B cell (primary cell): ENCODE measurements at regions of chr6 and their contacts with region 1.

Region 1: GRCh38 chr6:57316581-57317059 is 810 bp upstream of the PRIM2 start:
- DNase-seq: peak; percentile 88
- ATAC-seq: peak; percentile 83
- H3K4me3 ChIP-seq: peak overlapping the region; percentile 52 to 98 (median 78)
- H3K4me3 Mint-ChIP-seq: peak overlapping the region; percentile 98
- H3K27ac ChIP-seq: peak overlapping the region in 1 of 2 donors; percentile 60
- H3K27ac Mint-ChIP-seq: peak overlapping the region; percentile 93
- H3K4me1 ChIP-seq: peaks cover 7 to 8% of the 10 kb centered on the region in 2 donors
- H3K4me1 Mint-ChIP-seq: peaks cover 20% of the 10 kb centered on the region
- H3K27me3 ChIP-seq: peaks cover 0 to 3% (median 0%) of the 10 kb centered on the region in 4 experiments
- H3K27me3 Mint-ChIP-seq: no peaks in the 10 kb centered on the region
- CTCF ChIP-seq: peak; percentile 89

Region 2: DNA sequence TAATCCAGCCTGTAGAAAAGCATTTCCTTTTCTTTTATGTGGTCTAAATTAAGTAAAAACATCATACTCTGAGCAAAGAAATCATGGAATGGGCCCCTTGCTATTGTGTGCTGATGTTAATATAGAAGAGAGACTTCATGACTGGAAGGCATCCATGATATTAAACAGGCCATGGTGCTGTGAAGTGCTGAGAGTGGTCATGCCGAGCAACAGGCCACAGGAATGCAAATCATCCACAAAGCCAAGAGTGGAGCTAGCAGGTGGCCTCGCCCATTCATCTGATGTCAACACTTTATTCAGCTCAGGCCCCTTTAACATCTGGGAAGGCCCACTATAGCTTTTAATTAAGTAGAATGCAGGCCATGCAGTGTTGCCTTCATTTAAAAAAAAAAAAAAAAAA is 1622.5 kb before region 1 on chr6:
- CTCF ChIA-PET with region 1: no interaction called
- POLR2A ChIA-PET with region 1: no interaction called
- intact Hi-C with region 1: no loop called
- DNase-seq: no peak
- ATAC-seq: no peak
- H3K4me3 ChIP-seq: no peak overlapping the region
- H3K4me3 Mint-ChIP-seq: no peak overlapping the region
- H3K27ac ChIP-seq: no peak overlapping the region
- H3K27ac Mint-ChIP-seq: no peak overlapping the region
- H3K4me1 ChIP-seq: no peaks in the 10 kb centered on the region
- H3K4me1 Mint-ChIP-seq: no peaks in the 10 kb centered on the region
- H3K27me3 ChIP-seq: no peaks in the 10 kb centered on the region
- H3K27me3 Mint-ChIP-seq: no peaks in the 10 kb centered on the region
- CTCF ChIP-seq: no peak

Region 3: GRCh38 chr6:56359201-56359899 is 957.3 kb before region 1 on chr6:
- CTCF ChIA-PET with region 1: no interaction called
- POLR2A ChIA-PET with region 1: no interaction called
- intact Hi-C with region 1: loop called (anchors 2 kb)
- DNase-seq: peak; percentile 64
- ATAC-seq: peak; percentile 56
- H3K4me3 ChIP-seq: no peak overlapping the region
- H3K4me3 Mint-ChIP-seq: no peak overlapping the region
- H3K27ac ChIP-seq: no peak overlapping the region
- H3K27ac Mint-ChIP-seq: no peak overlapping the region
- H3K4me1 ChIP-seq: no peaks in the 10 kb centered on the region
- H3K4me1 Mint-ChIP-seq: no peaks in the 10 kb centered on the region
- H3K27me3 ChIP-seq: no peaks in the 10 kb centered on the region
- H3K27me3 Mint-ChIP-seq: no peaks in the 10 kb centered on the region
- CTCF ChIP-seq: peak; percentile 95

Region 4: GRCh38 chr6:56902641-56903464 is 413.8 kb before region 1 on chr6:
- CTCF ChIA-PET with region 1: interaction called, 188 read pairs
- POLR2A ChIA-PET with region 1: no interaction called
- intact Hi-C with region 1: loop called (anchors 1 kb)
- DNase-seq: peak; percentile 44
- ATAC-seq: no peak
- H3K4me3 ChIP-seq: no peak overlapping the region
- H3K4me3 Mint-ChIP-seq: no peak overlapping the region
- H3K27ac ChIP-seq: no peak overlapping the region
- H3K27ac Mint-ChIP-seq: no peak overlapping the region
- H3K4me1 ChIP-seq: peaks cover 0 to 4% of the 10 kb centered on the region in 2 donors
- H3K4me1 Mint-ChIP-seq: peaks cover 2% of the 10 kb centered on the region
- H3K27me3 ChIP-seq: peaks cover 0 to 5% (median 0%) of the 10 kb centered on the region in 4 experiments
- H3K27me3 Mint-ChIP-seq: peaks cover 12% of the 10 kb centered on the region
- CTCF ChIP-seq: peak; percentile 77

Region 5: DNA sequence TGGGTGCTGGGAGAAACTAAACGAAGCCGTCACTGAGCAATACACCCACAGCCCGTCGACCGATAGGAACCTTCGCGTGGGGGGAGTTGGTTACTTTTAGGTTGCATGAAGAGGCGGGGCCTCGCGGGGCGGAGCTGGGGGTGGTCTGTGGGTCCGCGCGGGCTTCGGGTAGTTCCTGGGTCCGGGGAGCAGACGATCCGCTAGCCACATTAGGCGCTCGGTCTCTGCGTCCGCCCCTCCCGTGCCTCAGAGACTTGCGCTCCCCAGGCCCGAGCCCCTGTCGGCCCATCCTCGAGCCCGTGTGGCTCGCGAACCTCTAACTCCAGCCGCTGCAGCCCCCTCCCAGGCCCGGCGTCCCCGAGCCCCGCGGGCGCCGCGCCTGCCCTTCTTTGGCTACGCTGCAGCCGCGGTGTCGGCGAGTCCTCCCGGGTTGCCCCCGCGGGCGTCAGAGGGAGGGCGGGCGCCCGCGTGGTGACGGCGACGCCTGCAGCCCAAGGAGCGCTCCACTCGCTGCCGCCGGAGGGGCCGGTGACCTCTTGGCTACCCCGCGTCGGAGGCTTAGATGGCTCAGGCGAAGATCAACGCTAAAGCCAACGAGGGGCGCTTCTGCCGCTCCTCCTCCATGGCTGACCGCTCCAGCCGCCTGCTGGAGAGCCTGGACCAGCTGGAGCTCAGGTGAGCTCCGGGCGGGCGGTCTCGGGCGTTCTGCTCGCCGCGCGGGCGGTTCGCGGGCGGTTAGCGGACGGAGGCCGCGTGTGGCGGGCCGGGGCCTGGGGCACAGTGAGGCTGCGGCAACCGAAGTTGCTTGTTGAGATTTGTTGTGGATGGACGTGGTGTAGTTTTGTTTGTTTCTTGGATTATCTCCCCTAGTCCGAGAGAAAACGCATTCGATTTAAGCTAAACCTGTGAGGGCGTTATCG is 144.2 kb before region 1 on chr6 and contains the start of gene BAG2:
- CTCF ChIA-PET with region 1: interaction called, 3 read pairs
- POLR2A ChIA-PET with region 1: no interaction called
- intact Hi-C with region 1: loop called (anchors 1 kb)
- DNase-seq: peak; percentile 94
- ATAC-seq: peak; percentile 86
- H3K4me3 ChIP-seq: peak within 1 kb of the TSS; percentile 65 to 83 (median 79)
- H3K4me3 Mint-ChIP-seq: peak within 1 kb of the TSS; percentile 89
- H3K27ac ChIP-seq: peak within 1 kb of the TSS; percentile 77 to 88
- H3K27ac Mint-ChIP-seq: peak within 1 kb of the TSS; percentile 88
- H3K4me1 ChIP-seq: peaks cover 9 to 18% of the 10 kb centered on the region in 2 donors
- H3K4me1 Mint-ChIP-seq: peaks cover 17% of the 10 kb centered on the region
- H3K27me3 ChIP-seq: no peaks in the 10 kb centered on the region
- H3K27me3 Mint-ChIP-seq: no peaks in the 10 kb centered on the region
- CTCF ChIP-seq: no peak
- total RNA-seq, gene BAG2: 4.6 and 4.7 TPM in 2 replicates

Region 6: DNA sequence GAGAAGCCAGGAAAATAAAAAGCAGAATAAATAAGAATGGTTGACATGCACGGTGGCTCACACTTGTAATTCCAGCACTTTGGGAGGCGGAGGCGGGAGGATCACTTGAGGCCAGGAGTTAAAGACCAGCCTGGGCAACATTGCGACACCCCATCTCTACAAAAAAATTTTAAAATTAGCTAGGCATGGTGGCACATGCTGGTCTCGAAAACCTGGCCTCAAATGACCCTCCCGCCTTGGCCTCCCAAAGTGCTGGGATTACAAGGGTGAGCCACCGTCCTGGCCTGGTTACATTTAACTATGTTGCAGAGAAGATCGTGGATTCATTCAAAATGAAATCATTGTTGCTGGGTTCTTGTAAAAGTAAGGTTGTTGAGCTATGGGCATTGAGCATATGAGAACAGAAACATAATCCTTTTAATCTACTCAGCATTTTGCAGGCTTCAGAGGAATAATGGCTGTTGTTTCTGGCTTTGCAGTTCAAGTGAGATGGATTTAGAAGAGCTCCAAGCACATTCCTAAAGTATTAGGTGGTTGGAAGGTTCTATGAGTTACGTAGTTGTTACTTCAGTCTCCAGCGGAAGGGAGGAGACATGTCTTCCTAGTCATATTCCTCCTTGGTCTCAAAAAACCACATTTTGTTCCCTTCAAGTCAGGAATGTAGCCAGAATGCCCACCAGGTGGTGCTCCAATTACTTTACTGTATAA is 48.9 kb before region 1 on chr6:
- CTCF ChIA-PET with region 1: interaction called, 31 read pairs
- POLR2A ChIA-PET with region 1: no interaction called
- intact Hi-C with region 1: loop called (anchors 1 kb)
- DNase-seq: peak; percentile 38
- ATAC-seq: no peak
- H3K4me3 ChIP-seq: no peak overlapping the region
- H3K4me3 Mint-ChIP-seq: no peak overlapping the region
- H3K27ac ChIP-seq: no peak overlapping the region
- H3K27ac Mint-ChIP-seq: no peak overlapping the region
- H3K4me1 ChIP-seq: no peaks in the 10 kb centered on the region
- H3K4me1 Mint-ChIP-seq: no peaks in the 10 kb centered on the region
- H3K27me3 ChIP-seq: no peaks in the 10 kb centered on the region
- H3K27me3 Mint-ChIP-seq: peaks cover 9% of the 10 kb centered on the region
- CTCF ChIP-seq: peak; percentile 60